K562 (cell line): ENCODE measurements at regions of chr17 and their contacts with region 1.

Region 1: DNA sequence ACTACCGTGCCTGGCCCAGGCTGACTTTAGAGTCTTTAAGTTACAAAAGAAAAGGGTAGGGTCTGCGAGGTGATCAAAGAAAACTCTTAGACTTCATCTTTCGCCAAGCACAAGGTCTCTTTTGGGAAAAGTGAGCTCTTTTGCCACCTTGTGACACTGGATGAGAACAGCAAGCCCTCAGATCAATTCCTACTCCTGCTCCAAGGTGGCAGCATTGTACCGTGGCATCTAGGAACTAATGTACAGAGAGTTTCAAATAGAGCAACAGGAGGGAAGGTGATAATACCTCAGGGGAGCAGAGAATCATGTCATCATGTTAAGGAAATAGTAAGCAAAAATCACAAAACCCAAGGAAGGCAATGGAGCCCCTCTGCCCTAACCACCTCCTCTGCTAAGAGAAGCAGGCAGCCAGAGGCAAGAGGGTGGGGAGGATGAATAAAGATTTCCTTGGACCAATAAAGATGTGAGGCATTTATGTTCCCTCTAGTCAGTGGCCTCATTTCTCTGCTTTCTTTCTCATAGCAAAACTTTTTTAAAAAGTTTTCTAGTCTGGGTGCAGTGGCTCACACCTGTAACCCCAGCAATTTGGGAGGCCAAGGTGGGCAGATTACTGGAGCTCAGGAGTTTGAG is 2.1 kb upstream of the C17orf78 start:
- DNase-seq: peak; percentile 66 to 90 (median 74)
- ATAC-seq: peak; percentile 97
- H3K4me3 ChIP-seq: no peak overlapping the region
- H3K27ac ChIP-seq: no peak overlapping the region
- H3K4me1 ChIP-seq: peaks cover 0 to 2% of the 10 kb centered on the region in 2 experiments; a peak in 2 of 5 replicates
- H3K27me3 ChIP-seq: no peaks in the 10 kb centered on the region
- CTCF ChIP-seq: peak; percentile 99 to 100 (median 100)
- EP300 ChIP-seq: no peak
- POLR2A ChIP-seq: no peak
- RAD21 ChIP-seq: peak; percentile 93 to 99

Region 2: GRCh38 chr17:37255432-37255831 is 118.2 kb before region 1 on chr17:
- CTCF ChIA-PET with region 1: interaction called, 13 read pairs
- POLR2A ChIA-PET with region 1: interaction called, 3 read pairs
- in situ Hi-C with region 1: no loop called
- intact Hi-C with region 1: no loop called
- DNase-seq: no peak
- ATAC-seq: no peak
- H3K4me3 ChIP-seq: no peak overlapping the region
- H3K27ac ChIP-seq: no peak overlapping the region
- H3K4me1 ChIP-seq: no peaks in the 10 kb centered on the region; a peak in 1 of 5 replicates
- H3K27me3 ChIP-seq: no peaks in the 10 kb centered on the region
- CTCF ChIP-seq: no peak
- EP300 ChIP-seq: no peak
- POLR2A ChIP-seq: no peak
- RAD21 ChIP-seq: no peak

Region 3: GRCh38 chr17:37392024-37392590 is 18.5 kb after region 1 on chr17:
- CTCF ChIA-PET with region 1: interaction called, 38 read pairs
- POLR2A ChIA-PET with region 1: interaction called, 3 read pairs
- in situ Hi-C with region 1: no loop called
- intact Hi-C with region 1: loop called (anchors 1 kb)
- DNase-seq: no peak
- ATAC-seq: peak; percentile 73
- H3K4me3 ChIP-seq: no peak overlapping the region
- H3K27ac ChIP-seq: no peak overlapping the region
- H3K4me1 ChIP-seq: no peaks in the 10 kb centered on the region
- H3K27me3 ChIP-seq: no peaks in the 10 kb centered on the region
- CTCF ChIP-seq: no peak
- EP300 ChIP-seq: no peak
- POLR2A ChIP-seq: no peak
- RAD21 ChIP-seq: no peak

Region 4: DNA sequence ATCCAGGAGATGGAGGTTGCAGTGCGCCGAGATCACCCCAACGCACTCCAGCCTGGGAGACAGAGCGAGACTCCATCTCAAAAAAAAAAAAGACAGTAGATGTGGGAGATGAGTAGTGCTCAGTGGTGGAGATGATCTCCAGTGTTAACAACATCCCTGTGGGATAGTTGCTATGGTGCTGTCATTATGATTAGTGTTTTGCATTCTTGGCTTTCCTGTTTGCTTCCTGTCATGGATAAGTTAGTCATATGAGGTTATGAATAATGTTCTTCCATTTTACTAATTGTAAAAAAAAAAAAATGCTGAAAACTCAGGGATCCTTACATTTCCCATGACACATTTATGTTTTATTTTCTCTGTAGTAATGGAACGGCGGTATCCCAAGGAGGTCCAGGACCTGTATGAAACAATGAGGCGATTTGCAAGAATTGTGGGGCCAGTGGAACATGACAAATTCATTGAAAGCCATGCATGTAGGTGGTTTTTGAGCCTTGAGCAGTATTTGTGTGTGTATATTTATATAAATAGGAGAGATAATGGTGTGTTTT is 91.5 kb after region 1 on chr17:
- CTCF ChIA-PET with region 1: no interaction called
- POLR2A ChIA-PET with region 1: no interaction called
- in situ Hi-C with region 1: no loop called
- intact Hi-C with region 1: no loop called
- DNase-seq: no peak
- ATAC-seq: no peak
- H3K4me3 ChIP-seq: no peak overlapping the region
- H3K27ac ChIP-seq: no peak overlapping the region
- H3K4me1 ChIP-seq: no peaks in the 10 kb centered on the region
- H3K27me3 ChIP-seq: no peaks in the 10 kb centered on the region
- CTCF ChIP-seq: no peak
- EP300 ChIP-seq: no peak
- POLR2A ChIP-seq: no peak
- RAD21 ChIP-seq: no peak

Region 5: GRCh38 chr17:37570527-37571093 is 197.0 kb after region 1 on chr17:
- CTCF ChIA-PET with region 1: interaction called, 12 read pairs
- POLR2A ChIA-PET with region 1: no interaction called
- in situ Hi-C with region 1: no loop called
- intact Hi-C with region 1: no loop called
- DNase-seq: peak; percentile 25 to 47 (median 39)
- ATAC-seq: peak; percentile 81
- H3K4me3 ChIP-seq: no peak overlapping the region
- H3K27ac ChIP-seq: no peak overlapping the region
- H3K4me1 ChIP-seq: no peaks in the 10 kb centered on the region
- H3K27me3 ChIP-seq: no peaks in the 10 kb centered on the region
- CTCF ChIP-seq: peak; percentile 57 to 66 (median 57)
- EP300 ChIP-seq: no peak
- POLR2A ChIP-seq: no peak
- RAD21 ChIP-seq: peak; percentile 14 to 40; a peak in 2 of 4 replicates

Region 6: GRCh38 chr17:37791447-37792399 is 418.1 kb after region 1 on chr17:
- CTCF ChIA-PET with region 1: interaction called, 9 read pairs
- POLR2A ChIA-PET with region 1: no interaction called
- in situ Hi-C with region 1: no loop called
- intact Hi-C with region 1: loop called (anchors 10 kb)
- DNase-seq: peak; percentile 58 to 72 (median 67)
- ATAC-seq: peak; percentile 90
- H3K4me3 ChIP-seq: no peak overlapping the region
- H3K27ac ChIP-seq: no peak overlapping the region
- H3K4me1 ChIP-seq: no peaks in the 10 kb centered on the region
- H3K27me3 ChIP-seq: peaks cover 24 to 47% of the 10 kb centered on the region in 2 experiments; a peak in 4 of 5 replicates
- CTCF ChIP-seq: peak; percentile 63 to 82 (median 81)
- EP300 ChIP-seq: no peak
- POLR2A ChIP-seq: no peak
- RAD21 ChIP-seq: peak; percentile 46 to 77